Posterior vena cava (tissue), 2 donors: ENCODE measurements at regions of chr19 and their contacts with region 1.

Region 1: DNA sequence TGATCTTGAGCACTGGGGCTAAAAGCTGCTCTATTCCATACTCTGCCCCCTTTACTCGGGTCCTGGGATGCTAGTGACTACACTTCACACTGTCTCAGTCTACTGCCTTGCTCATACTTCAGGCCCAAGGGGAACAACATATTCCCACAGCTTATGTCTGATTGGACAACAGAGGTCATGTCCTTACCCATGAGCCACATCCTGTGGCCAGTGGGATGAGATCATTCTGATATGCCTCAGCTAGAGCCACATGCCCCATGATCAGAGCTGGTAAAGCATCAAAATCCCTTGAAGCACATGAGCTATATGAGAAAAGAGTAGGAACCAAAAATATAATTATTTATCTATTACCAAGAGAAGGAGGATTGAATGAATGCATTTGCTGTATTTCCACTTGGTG is 290.1 kb upstream of the TSHZ3 start:
- DNase-seq: no peak

Region 2: DNA sequence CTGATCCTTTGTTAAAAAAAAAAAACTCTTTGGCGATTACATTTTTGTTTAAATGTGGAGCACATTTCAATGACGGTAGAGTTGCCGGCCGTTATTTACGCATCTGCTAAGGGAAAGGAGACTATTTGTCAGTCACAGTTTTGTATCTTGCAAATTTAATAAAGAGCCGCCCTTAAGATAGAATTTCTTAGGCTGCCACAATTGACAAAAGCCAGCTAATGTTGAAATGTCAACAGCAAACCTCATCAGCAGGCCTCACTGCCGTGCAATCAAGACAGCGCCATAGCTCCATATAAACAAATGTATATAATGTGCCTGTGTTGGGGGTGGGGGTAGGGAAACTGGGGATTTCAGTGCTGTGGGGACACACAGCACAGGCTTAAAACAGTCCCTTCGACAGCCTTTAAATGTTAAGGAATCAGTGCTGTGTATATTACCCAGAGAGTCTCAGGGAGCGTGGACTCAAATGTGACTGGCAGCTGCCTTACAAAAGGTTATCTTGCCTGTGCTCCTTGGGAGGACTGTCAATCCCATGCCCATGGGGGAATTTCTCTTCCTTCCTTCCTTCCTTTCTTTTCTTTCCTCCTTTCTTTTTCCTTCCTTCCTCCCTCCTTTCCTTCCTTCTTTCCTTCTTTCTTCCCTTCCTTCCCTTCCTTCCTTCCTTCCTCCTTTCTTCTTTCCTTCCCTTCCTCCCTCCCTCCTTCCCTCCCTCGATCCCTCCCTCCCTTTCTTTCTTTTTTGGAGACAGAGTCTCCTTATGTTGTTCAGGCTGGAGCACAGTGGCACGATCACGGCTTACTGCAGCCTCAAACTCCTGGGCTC is 1589.2 kb before region 1 on chr19:
- intact Hi-C with region 1: loop called in 1 of 2 experiments (anchors 5 kb)
- DNase-seq: no peak